CD4-positive, alpha-beta memory T cell (primary cell): ENCODE measurements at regions of chr17 and their contacts with region 1.

Region 1: GRCh38 chr17:78140169-78140976 is 5.8 kb upstream of the C17orf99 start:
- DNase-seq: peak; percentile 95 to 97 (median 96)
- H3K4me3 ChIP-seq: peak overlapping the region in 1 of 2 donors; percentile 2
- H3K4me3 Mint-ChIP-seq: peak overlapping the region; percentile 30 to 72 (median 58)
- H3K27ac ChIP-seq: peak overlapping the region; percentile 0
- H3K27ac Mint-ChIP-seq: peak overlapping the region; percentile 82 to 94 (median 91)
- H3K4me1 ChIP-seq: peaks cover 87% of the 10 kb centered on the region
- H3K4me1 Mint-ChIP-seq: peaks cover 29 to 82% (median 53%) of the 10 kb centered on the region in 4 donors
- H3K27me3 ChIP-seq: no peaks in the 10 kb centered on the region
- H3K27me3 Mint-ChIP-seq: no peaks in the 10 kb centered on the region

Region 2: DNA sequence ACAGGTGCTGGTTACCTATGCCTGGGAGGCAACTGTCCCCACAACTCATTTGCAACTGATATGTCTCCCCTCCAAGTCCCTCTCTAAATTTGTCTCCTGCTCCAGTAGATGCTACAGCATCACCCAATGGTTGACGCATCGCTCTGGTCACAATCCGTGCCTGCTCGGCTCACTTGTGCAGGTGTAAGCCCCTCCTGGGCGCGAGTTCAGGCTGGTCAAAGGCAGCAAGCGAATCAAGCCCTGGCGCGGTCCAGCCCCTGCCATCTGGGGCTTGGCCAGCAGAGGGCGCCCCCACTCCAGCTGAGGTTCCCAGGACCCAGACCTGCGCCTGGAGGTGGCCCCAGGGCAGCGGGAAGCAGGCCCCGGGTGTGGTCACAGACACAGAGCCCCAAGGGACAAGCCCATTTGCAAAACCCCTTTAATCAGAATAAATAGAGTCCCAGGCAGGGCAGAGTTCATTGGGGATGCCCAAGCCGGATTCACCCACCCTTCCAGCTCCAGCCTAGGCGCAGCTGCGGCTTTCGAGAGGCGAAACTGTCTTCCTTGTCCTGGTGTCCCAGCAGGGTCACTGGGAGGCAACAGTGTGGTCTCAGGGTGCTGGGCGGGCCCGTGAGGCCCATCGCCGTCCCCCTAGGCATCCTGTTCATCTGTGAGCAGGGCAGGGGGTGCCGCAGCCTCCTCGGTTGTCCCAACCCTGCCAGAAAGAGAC is 27.7 kb before region 1 on chr17:
- CTCF ChIA-PET with region 1: interaction called, 121 read pairs
- POLR2A ChIA-PET with region 1: interaction called, 1,172 read pairs
- intact Hi-C with region 1: no loop called
- DNase-seq: peak; percentile 68 to 79 (median 72)
- H3K4me3 ChIP-seq: no peak overlapping the region
- H3K4me3 Mint-ChIP-seq: peak overlapping the region in 4 of 8 donors; percentile 43 to 59 (median 53)
- H3K27ac ChIP-seq: peak overlapping the region; percentile 35
- H3K27ac Mint-ChIP-seq: peak overlapping the region; percentile 81 to 96 (median 93)
- H3K4me1 ChIP-seq: peaks cover 47% of the 10 kb centered on the region
- H3K4me1 Mint-ChIP-seq: peaks cover 25 to 51% (median 36%) of the 10 kb centered on the region in 4 donors
- H3K27me3 ChIP-seq: no peaks in the 10 kb centered on the region
- H3K27me3 Mint-ChIP-seq: no peaks in the 10 kb centered on the region

Region 3: DNA sequence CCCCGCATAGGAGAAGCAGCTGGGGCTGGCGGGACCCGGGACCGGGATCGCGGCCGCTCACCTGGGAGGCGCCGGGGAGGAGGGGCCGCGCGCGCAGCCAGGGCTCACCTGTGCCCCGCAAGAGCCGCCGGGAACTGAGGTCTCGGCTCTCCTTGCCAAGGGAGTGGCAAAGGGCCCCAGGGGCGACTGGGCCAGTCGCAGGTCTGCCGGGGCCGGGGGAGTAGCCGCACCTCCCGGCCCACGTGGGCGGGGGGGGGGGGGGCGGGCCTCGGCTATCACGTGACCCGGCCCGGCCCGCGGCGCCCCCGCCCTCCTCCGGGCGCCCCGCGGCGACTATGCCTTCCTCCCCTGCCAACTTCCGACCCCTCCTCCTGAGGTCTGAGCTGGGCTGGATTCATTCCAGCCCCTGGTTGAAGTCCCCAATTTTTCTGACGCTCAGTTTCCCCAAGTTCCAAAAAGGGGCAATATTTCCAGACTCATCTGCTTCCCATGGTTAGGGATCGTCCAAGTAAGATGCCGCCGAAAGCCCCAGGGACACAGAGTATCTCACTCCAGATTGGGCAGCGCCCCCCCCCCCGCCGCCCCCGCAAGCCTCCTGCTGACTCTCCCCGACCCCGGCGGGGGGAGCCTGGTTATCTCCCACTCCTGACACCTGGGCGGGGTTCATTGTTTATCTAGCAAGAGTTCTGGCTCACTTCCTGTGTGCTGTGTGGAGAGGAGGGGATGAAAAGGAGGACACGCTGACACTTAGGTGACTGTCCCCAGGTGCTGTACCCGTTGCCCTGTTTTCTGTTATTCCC is 11.6 kb before region 1 on chr17 and contains the start of gene TMC6:
- CTCF ChIA-PET with region 1: interaction called, 121 read pairs
- POLR2A ChIA-PET with region 1: interaction called, 1,172 read pairs
- intact Hi-C with region 1: loop called (anchors 1 kb)
- DNase-seq: peak; percentile 80 to 91 (median 81)
- H3K4me3 ChIP-seq: peak within 1 kb of the TSS; percentile 97 to 99
- H3K4me3 Mint-ChIP-seq: peak within 1 kb of the TSS; percentile 95 to 100 (median 99)
- H3K27ac ChIP-seq: peak within 1 kb of the TSS; percentile 81
- H3K27ac Mint-ChIP-seq: peak within 1 kb of the TSS; percentile 95 to 99 (median 98)
- H3K4me1 ChIP-seq: peaks cover 64% of the 10 kb centered on the region
- H3K4me1 Mint-ChIP-seq: peaks cover 18 to 78% (median 34%) of the 10 kb centered on the region in 4 donors
- H3K27me3 ChIP-seq: no peaks in the 10 kb centered on the region
- H3K27me3 Mint-ChIP-seq: no peaks in the 10 kb centered on the region
- total RNA-seq, gene TMC6: 697 to 702 TPM

Region 4: GRCh38 chr17:78168242-78168902 is 28.0 kb after region 1 on chr17 and contains the start of gene SYNGR2:
- CTCF ChIA-PET with region 1: interaction called, 4 read pairs
- POLR2A ChIA-PET with region 1: interaction called, 170 read pairs
- intact Hi-C with region 1: loop called (anchors 1 kb)
- DNase-seq: peak; percentile 82 to 90 (median 88)
- H3K4me3 ChIP-seq: peak within 1 kb of the TSS; percentile 42 to 60
- H3K4me3 Mint-ChIP-seq: peak within 1 kb of the TSS; percentile 64 to 84 (median 74)
- H3K27ac ChIP-seq: peak within 1 kb of the TSS; percentile 87
- H3K27ac Mint-ChIP-seq: peak within 1 kb of the TSS; percentile 57 to 84 (median 79)
- H3K4me1 ChIP-seq: peaks cover 41% of the 10 kb centered on the region
- H3K4me1 Mint-ChIP-seq: peaks cover 17 to 44% (median 32%) of the 10 kb centered on the region in 4 donors
- H3K27me3 ChIP-seq: no peaks in the 10 kb centered on the region
- H3K27me3 Mint-ChIP-seq: no peaks in the 10 kb centered on the region
- total RNA-seq, gene SYNGR2: 60.3 to 61.6 TPM

Region 5: DNA sequence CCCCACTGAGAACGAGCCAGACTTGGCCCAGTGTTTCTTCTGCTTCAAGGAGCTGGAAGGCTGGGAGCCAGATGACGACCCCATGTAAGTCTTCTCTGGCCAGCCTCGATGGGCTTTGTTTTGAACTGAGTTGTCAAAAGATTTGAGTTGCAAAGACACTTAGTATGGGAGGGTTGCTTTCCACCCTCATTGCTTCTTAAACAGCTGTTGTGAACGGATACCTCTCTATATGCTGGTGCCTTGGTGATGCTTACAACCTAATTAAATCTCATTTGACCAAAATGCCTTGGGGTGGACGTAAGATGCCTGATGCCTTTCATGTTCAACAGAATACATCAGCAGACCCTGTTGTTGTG is 74.3 kb after region 1 on chr17:
- CTCF ChIA-PET with region 1: no interaction called
- POLR2A ChIA-PET with region 1: interaction called, 8 read pairs
- intact Hi-C with region 1: loop called (anchors 1 kb)
- DNase-seq: no peak
- H3K4me3 ChIP-seq: peak overlapping the region in 1 of 2 donors; percentile 69
- H3K4me3 Mint-ChIP-seq: peak overlapping the region; percentile 28 to 84 (median 72)
- H3K27ac ChIP-seq: peak overlapping the region; percentile 21
- H3K27ac Mint-ChIP-seq: peak overlapping the region in 1 of 7 donors; percentile 84
- H3K4me1 ChIP-seq: peaks cover 8% of the 10 kb centered on the region
- H3K4me1 Mint-ChIP-seq: peaks cover 3 to 9% (median 5%) of the 10 kb centered on the region in 4 donors
- H3K27me3 ChIP-seq: no peaks in the 10 kb centered on the region
- H3K27me3 Mint-ChIP-seq: no peaks in the 10 kb centered on the region